CD8-positive, alpha-beta memory T cell (primary cell): ENCODE measurements at regions of chr18 and their contacts with region 1.

Region 1: DNA sequence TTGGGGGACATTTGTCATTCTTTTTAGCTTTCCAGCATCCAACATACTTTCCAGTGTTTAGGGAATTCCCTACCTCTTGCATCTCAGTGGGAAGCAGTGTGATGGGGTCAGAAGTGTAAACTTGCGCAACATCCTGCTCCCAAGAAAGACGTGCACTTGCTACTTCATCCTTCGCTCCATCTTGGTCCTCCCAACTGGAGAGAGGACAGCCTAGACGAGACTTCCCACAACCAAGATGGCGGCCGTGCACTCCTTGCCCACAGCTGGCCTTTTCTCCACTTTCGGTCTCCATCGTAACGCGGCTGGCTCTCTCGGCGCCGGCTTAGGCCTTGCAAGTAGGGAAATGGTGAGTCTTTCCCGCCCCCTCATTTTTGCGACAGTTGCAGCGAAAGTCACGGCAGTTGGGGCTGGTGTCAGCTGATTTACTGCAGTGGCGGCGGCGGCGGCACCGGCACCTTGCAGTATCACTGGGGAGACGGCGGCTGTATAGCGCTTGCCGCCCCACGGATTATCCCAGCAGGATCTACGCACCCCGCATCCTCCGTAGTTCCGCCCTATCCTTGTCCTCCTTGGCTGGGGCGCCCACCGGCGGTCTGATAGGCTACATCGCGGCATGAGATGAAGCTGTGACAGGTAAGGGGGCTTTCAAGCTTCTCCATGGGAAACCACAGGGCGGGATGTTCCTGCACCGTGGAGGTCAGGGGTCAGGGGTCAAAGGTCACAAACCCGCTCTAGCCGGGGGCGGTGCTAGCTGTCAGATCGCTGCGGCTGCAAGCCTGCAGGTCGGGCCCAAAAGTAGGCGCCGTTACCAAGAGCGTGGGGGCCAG is at the start of gene WDR7:
- DNase-seq: peak; percentile 90 to 97 (median 95)
- H3K4me3 ChIP-seq: peak within 1 kb of the TSS; percentile 97
- H3K4me3 Mint-ChIP-seq: peak within 1 kb of the TSS; percentile 92 to 97 (median 94)
- H3K27ac ChIP-seq: peak within 1 kb of the TSS; percentile 74
- H3K27ac Mint-ChIP-seq: peak within 1 kb of the TSS; percentile 93 to 98 (median 96)
- H3K4me1 ChIP-seq: peaks cover 39% of the 10 kb centered on the region
- H3K4me1 Mint-ChIP-seq: peaks cover 54 to 77% (median 61%) of the 10 kb centered on the region in 3 donors
- H3K27me3 ChIP-seq: no peaks in the 10 kb centered on the region
- H3K27me3 Mint-ChIP-seq: no peaks in the 10 kb centered on the region
- total RNA-seq, gene WDR7: 20.5 to 20.6 TPM

Region 2: GRCh38 chr18:56083097-56083521 is 568.0 kb before region 1 on chr18:
- CTCF ChIA-PET with region 1: no interaction called
- POLR2A ChIA-PET with region 1: no interaction called
- DNase-seq: no peak
- H3K4me3 ChIP-seq: no peak overlapping the region
- H3K4me3 Mint-ChIP-seq: no peak overlapping the region
- H3K27ac ChIP-seq: no peak overlapping the region
- H3K27ac Mint-ChIP-seq: no peak overlapping the region
- H3K4me1 ChIP-seq: no peaks in the 10 kb centered on the region
- H3K4me1 Mint-ChIP-seq: no peaks in the 10 kb centered on the region
- H3K27me3 ChIP-seq: no peaks in the 10 kb centered on the region
- H3K27me3 Mint-ChIP-seq: no peaks in the 10 kb centered on the region

Region 3: GRCh38 chr18:56638271-56639093 is 12.7 kb before region 1 on chr18 and contains the start of gene TXNL1:
- CTCF ChIA-PET with region 1: interaction called, 20 read pairs
- POLR2A ChIA-PET with region 1: interaction called, 32 read pairs
- DNase-seq: peak; percentile 97 to 99 (median 99)
- H3K4me3 ChIP-seq: peak within 1 kb of the TSS; percentile 88
- H3K4me3 Mint-ChIP-seq: peak within 1 kb of the TSS; percentile 88 to 100 (median 98)
- H3K27ac ChIP-seq: peak within 1 kb of the TSS; percentile 87
- H3K27ac Mint-ChIP-seq: peak within 1 kb of the TSS; percentile 93 to 100 (median 98)
- H3K4me1 ChIP-seq: peaks cover 27% of the 10 kb centered on the region
- H3K4me1 Mint-ChIP-seq: peaks cover 51 to 57% (median 53%) of the 10 kb centered on the region in 3 donors
- H3K27me3 ChIP-seq: no peaks in the 10 kb centered on the region
- H3K27me3 Mint-ChIP-seq: no peaks in the 10 kb centered on the region
- total RNA-seq, gene TXNL1: 86.8 to 91.6 TPM